ENCODE measurements at regions of chr1 and their contacts with region 1.

Region 1: GRCh38 chr1:66446261-66447001 is 87.5 kb upstream of the SGIP1 start:
- DNase-seq: peak; percentile 84 to 92 (median 86)
- H3K4me3 ChIP-seq: no peak overlapping the region
- H3K27ac ChIP-seq: peak overlapping the region in 1 of 2 experiments; percentile 73
- H3K4me1 ChIP-seq: peaks cover 12 to 31% (median 19%) of the 10 kb centered on the region in 4 experiments
- H3K27me3 ChIP-seq: no peaks in the 10 kb centered on the region

Region 2: GRCh38 chr1:66242646-66243547 is 203.5 kb before region 1 on chr1:
- CTCF ChIA-PET with region 1: interaction called, 374 read pairs
- POLR2A ChIA-PET with region 1: no interaction called
- DNase-seq: peak; percentile 82 to 87 (median 83)
- H3K4me3 ChIP-seq: no peak overlapping the region
- H3K27ac ChIP-seq: no peak overlapping the region
- H3K4me1 ChIP-seq: peaks cover 3 to 7% (median 6%) of the 10 kb centered on the region in 4 experiments
- H3K27me3 ChIP-seq: no peaks in the 10 kb centered on the region

Region 3: GRCh38 chr1:66285618-66286270 is 160.7 kb before region 1 on chr1:
- CTCF ChIA-PET with region 1: interaction called, 10 read pairs
- POLR2A ChIA-PET with region 1: no interaction called
- DNase-seq: no peak
- H3K4me3 ChIP-seq: no peak overlapping the region
- H3K27ac ChIP-seq: no peak overlapping the region
- H3K4me1 ChIP-seq: no peaks in the 10 kb centered on the region
- H3K27me3 ChIP-seq: no peaks in the 10 kb centered on the region

Region 4: GRCh38 chr1:66350001-66350547 is 96.4 kb before region 1 on chr1:
- CTCF ChIA-PET with region 1: interaction called, 28 read pairs
- POLR2A ChIA-PET with region 1: no interaction called
- DNase-seq: peak; percentile 60 to 93 (median 87)
- H3K4me3 ChIP-seq: peak overlapping the region in 3 of 7 experiments; percentile 2 to 51 (median 15)
- H3K27ac ChIP-seq: peak overlapping the region; percentile 37 to 80
- H3K4me1 ChIP-seq: peaks cover 43 to 54% (median 48%) of the 10 kb centered on the region in 4 experiments
- H3K27me3 ChIP-seq: no peaks in the 10 kb centered on the region

Region 5: GRCh38 chr1:66374561-66375111 is 71.8 kb before region 1 on chr1:
- CTCF ChIA-PET with region 1: interaction called, 18 read pairs
- POLR2A ChIA-PET with region 1: interaction called, 4 read pairs
- DNase-seq: peak in 2 of 3 donors; percentile 64 to 70
- H3K4me3 ChIP-seq: peak overlapping the region in 1 of 7 experiments; percentile 30
- H3K27ac ChIP-seq: peak overlapping the region in 1 of 2 experiments; percentile 47
- H3K4me1 ChIP-seq: peaks cover 37 to 55% (median 48%) of the 10 kb centered on the region in 4 experiments
- H3K27me3 ChIP-seq: no peaks in the 10 kb centered on the region

Region 6: DNA sequence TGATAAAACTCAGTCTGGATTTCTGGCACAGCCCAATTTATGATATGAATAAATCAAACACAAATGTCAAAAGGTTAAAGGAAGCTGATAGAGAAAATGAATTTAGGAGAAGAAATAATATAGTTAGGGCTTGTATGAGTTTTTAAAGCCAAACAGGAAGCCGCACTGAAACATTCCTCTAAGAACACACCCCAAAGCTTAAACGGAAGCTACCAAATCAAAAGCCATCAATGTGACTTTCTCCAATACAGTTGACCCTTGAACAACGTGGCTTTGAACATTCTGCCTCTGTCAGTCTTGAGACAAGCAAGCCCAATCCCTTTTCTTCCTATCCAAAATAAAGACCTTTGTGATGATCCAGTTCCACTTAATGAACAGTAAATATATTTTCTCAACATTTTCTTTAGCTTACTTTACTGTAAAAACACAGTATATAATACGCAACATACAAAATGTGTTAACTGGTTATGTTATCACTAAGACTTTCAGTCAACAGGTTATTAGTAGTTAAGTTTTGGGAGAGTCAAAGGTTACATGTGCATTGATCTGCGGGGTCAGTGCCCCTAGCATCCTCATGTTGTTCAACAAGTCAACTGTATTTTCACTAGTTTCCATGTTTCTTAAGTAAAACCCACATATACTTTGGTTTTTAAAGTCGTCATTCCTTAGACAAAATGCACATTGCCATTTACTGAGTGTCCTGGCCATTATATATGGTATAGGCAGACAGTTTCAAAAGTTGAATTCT is 972.6 kb after region 1 on chr1:
- CTCF ChIA-PET with region 1: no interaction called
- POLR2A ChIA-PET with region 1: no interaction called
- DNase-seq: no peak
- H3K4me3 ChIP-seq: no peak overlapping the region
- H3K27ac ChIP-seq: peak overlapping the region in 1 of 2 experiments; percentile 17
- H3K4me1 ChIP-seq: no peaks in the 10 kb centered on the region
- H3K27me3 ChIP-seq: no peaks in the 10 kb centered on the region